Gastrocnemius medialis (tissue), 4 donors: ENCODE measurements at regions of chr3 and their contacts with region 1.

Region 1: GRCh38 chr3:33636125-33636850 is 81.8 kb downstream of the CLASP2 start:
- DNase-seq: no peak
- ATAC-seq: peak in 1 of 2 donors; percentile 65
- H3K4me3 ChIP-seq: no peak overlapping the region
- H3K27ac ChIP-seq: no peak overlapping the region
- H3K4me1 ChIP-seq: no peaks in the 10 kb centered on the region
- H3K27me3 ChIP-seq: no peaks in the 10 kb centered on the region
- CTCF ChIP-seq: peak; percentile 38 to 72 (median 59)
- POLR2A ChIP-seq: no peak

Region 2: DNA sequence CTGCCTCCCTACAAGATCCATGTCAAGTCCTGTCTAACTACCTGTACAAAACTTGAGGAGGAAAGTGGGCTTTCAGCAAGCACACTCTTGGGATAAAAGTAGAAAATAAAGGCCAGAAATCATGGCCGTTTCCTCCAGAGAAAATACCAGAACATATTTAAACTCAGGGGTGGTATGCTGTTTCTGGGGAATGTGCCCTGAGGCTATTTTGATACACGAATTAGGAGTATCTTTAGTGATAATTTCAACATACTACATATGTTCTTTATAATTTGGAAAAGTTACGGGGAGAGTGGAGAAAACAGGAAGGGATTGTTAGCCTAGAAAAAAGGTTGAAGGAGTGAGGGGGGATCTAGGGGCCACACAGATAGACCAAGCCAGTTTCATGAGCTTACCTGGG is 143.5 kb after region 1 on chr3:
- in situ Hi-C with region 1: loop called in 2 of 4 experiments (anchors 5 to 10 kb)
- intact Hi-C with region 1: no loop called
- DNase-seq: no peak
- ATAC-seq: no peak
- H3K4me3 ChIP-seq: no peak overlapping the region
- H3K27ac ChIP-seq: no peak overlapping the region
- H3K4me1 ChIP-seq: no peaks in the 10 kb centered on the region
- H3K27me3 ChIP-seq: no peaks in the 10 kb centered on the region
- CTCF ChIP-seq: no peak
- POLR2A ChIP-seq: no peak

Region 3: GRCh38 chr3:33787328-33788009 is 151.2 kb after region 1 on chr3:
- in situ Hi-C with region 1: loop called (anchors 5 to 10 kb)
- intact Hi-C with region 1: loop called (anchors 1 kb)
- DNase-seq: peak; percentile 9 to 41
- ATAC-seq: peak; percentile 83 to 93
- H3K4me3 ChIP-seq: peak overlapping the region in 3 of 4 donors; percentile 22 to 48 (median 37)
- H3K27ac ChIP-seq: no peak overlapping the region
- H3K4me1 ChIP-seq: no peaks in the 10 kb centered on the region
- H3K27me3 ChIP-seq: no peaks in the 10 kb centered on the region
- CTCF ChIP-seq: peak; percentile 40 to 81 (median 64)
- POLR2A ChIP-seq: no peak